Activated CD4-positive, alpha-beta memory T cell treated with anti-CD3 and anti-CD28 coated beads for 36 hours (primary cell): ENCODE measurements at regions of chr15 and their contacts with region 1.

Region 1: DNA sequence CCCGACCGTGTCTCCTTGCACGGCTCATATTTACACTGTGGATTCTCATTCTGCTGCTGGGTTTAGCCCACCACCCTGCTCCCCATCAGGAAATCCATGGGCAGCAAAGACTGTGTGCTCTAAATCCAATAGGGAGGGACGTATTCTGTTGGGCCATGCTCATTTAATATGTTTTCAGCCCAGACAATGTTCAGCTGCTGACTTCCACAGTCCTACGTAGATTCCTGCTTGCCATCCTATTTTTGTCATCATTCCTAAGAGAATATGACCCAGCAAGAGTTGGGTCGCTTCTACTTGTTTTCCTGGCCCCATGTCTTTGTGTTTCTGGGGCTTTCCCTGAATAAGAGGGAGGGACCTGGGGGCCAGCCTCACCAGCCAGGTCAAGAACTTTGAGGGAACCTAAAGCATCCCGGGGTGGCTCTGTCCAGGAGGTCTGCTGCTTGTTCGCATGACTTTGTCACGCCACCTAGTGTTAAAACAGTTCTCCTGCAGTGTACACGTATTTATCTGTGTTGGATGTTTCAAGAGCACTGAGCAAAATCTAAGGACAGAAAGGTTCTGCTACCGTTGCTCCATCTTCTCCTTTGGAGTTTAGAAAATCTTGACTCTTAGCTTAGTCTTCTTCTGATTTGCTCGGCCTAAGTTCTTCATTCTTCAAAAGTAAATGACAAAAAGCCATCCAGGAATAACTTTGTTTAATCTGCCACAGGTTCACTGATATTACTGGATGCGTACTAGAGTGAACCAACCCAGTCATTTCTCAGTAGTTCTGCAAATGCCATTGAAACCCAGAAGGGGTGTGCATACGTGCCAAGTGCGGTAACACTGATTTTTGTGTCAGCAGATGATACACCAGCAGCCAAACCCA is 79.8 kb upstream of the NR2E3 start:
- DNase-seq: peak; percentile 30
- H3K4me3 Mint-ChIP-seq: no peak overlapping the region
- H3K27ac Mint-ChIP-seq: no peak overlapping the region
- H3K4me1 Mint-ChIP-seq: no peaks in the 10 kb centered on the region
- H3K27me3 Mint-ChIP-seq: peaks cover 5% of the 10 kb centered on the region

Region 2: DNA sequence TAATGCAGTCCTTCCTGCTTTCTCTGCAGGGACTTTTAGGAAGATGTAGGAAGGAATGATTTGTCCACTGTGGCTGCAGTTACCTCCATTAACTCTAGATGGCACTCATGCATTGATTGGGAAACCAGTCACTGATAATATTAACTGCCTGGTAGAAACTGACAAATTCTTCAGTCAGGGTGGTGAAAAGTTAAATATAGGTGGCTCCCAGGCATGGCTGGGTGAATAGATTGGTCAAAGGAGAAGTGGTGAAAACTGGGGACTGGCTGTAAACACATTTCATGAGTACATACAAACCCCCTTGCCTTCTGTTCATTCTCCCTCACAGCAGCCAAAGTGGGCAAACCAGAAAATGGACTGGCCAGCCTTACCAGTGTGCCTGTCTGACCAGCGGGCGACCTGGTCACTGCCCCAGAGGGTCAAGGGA is 281.8 kb before region 1 on chr15:
- CTCF ChIA-PET with region 1: interaction called, 4 read pairs
- POLR2A ChIA-PET with region 1: no interaction called
- intact Hi-C with region 1: loop called (anchors 2 kb)
- DNase-seq: no peak
- H3K4me3 Mint-ChIP-seq: no peak overlapping the region
- H3K27ac Mint-ChIP-seq: no peak overlapping the region
- H3K4me1 Mint-ChIP-seq: no peaks in the 10 kb centered on the region
- H3K27me3 Mint-ChIP-seq: no peaks in the 10 kb centered on the region

Region 3: GRCh38 chr15:71496336-71496955 is 234.1 kb before region 1 on chr15:
- CTCF ChIA-PET with region 1: no interaction called
- POLR2A ChIA-PET with region 1: no interaction called
- intact Hi-C with region 1: no loop called
- DNase-seq: no peak
- H3K4me3 Mint-ChIP-seq: no peak overlapping the region
- H3K27ac Mint-ChIP-seq: no peak overlapping the region
- H3K4me1 Mint-ChIP-seq: no peaks in the 10 kb centered on the region
- H3K27me3 Mint-ChIP-seq: peaks cover 10% of the 10 kb centered on the region

Region 4: DNA sequence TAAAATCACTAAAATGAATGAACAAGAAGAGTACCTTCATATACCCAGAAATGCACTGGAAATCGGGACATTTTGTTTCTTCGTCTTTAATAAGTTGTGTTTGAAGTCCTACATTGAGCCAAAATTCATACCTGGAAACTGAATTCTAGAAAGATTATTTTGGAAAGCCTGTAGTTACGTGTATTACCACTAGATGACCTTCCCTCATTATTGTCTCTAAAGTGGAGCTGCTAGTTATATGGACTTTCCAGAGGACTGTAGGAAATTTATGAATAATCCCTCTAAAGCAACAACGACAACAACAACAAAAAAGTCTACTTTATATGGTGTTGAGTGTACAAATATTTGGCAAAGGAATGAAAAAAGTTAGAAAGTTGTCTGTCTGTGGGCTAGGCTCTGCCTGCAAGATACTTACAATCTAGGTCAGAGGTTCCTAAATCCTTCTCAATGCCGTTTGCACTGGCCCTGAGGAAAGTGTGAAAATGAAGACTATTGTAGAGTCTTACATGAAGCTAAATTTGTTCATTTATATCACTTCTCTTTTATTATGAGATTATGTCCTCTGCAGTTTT is 155.0 kb before region 1 on chr15:
- CTCF ChIA-PET with region 1: interaction called, 10 read pairs
- POLR2A ChIA-PET with region 1: no interaction called
- intact Hi-C with region 1: loop called (anchors 5 kb)
- DNase-seq: no peak
- H3K4me3 Mint-ChIP-seq: no peak overlapping the region
- H3K27ac Mint-ChIP-seq: no peak overlapping the region
- H3K4me1 Mint-ChIP-seq: no peaks in the 10 kb centered on the region
- H3K27me3 Mint-ChIP-seq: peaks cover 12% of the 10 kb centered on the region

Region 5: GRCh38 chr15:71743861-71744382 is 13.4 kb after region 1 on chr15:
- CTCF ChIA-PET with region 1: interaction called, 15 read pairs
- POLR2A ChIA-PET with region 1: no interaction called
- intact Hi-C with region 1: no loop called
- DNase-seq: peak; percentile 58
- H3K4me3 Mint-ChIP-seq: no peak overlapping the region
- H3K27ac Mint-ChIP-seq: no peak overlapping the region
- H3K4me1 Mint-ChIP-seq: no peaks in the 10 kb centered on the region
- H3K27me3 Mint-ChIP-seq: peaks cover 6% of the 10 kb centered on the region